ENCODE measurements at regions of chr4 and their contacts with region 1.

Region 1: DNA sequence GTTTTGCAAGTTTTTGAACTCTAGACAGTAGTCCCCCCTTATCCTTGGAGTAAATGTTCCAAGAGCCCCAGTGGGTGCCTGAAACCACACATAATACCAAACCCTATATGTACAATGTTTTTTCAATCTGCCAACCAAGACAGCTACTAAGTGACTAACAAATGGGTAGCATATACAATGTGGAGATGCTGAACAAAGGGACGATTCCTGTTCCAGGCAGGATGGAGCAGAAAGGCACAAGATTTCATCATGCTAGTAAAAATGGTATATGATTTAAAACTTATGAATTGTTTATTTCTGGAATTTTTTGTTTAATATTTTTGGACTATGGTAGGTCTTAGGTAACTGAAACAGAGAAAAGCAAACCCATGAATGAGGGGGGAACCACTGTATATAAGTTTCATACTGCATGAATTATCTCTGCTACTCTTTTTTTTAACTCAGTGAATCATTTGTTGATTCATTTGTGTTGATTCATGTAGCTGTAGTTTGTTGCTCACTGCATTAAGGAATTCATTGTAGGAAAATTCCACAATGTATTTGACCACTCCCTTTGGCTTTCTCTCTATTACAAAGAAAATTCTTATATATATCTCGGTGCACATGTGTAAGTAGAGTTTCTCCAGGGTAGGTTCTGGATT is 21.9 kb upstream of the ANXA3 start:
- DNase-seq: no peak
- ATAC-seq: no peak
- H3K4me3 ChIP-seq: no peak overlapping the region
- H3K27ac ChIP-seq: no peak overlapping the region
- H3K4me1 ChIP-seq: no peaks in the 10 kb centered on the region; a peak in 1 of 5 replicates
- H3K27me3 ChIP-seq: peaks cover 10 to 13% of the 10 kb centered on the region in 2 experiments; a peak in 4 of 5 replicates
- CTCF ChIP-seq: no peak
- EP300 ChIP-seq: no peak
- POLR2A ChIP-seq: no peak
- RAD21 ChIP-seq: no peak

Region 2: DNA sequence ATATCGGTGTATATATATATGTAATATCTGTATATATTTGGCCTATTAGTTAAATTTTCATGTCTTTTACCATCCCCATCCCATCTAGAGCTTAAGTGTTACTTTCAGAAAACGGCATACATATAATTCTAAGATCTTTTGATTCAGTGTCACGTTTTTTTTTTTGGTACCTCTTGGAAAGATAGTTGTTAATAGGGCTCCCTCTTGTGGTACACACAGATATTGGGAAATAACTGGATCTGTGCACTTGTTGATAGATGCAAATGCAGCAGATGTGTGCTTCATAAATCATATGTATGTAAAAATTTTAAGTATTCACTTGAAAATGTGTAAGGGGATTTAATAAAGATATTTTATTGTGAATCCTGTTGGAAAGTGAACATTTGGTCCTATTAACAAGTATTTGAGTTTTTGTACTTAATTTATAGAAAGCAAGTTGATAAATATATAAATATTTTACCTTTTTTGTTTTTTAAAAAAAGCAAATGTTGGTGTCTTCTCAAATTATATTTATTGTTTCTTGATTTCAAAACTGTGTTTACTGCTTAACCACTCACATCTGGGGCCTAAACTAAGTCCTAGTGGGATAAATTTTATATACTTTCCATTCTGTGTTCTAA is 334.8 kb after region 1 on chr4:
- CTCF ChIA-PET with region 1: no interaction called
- POLR2A ChIA-PET with region 1: no interaction called
- in situ Hi-C with region 1: no loop called
- intact Hi-C with region 1: loop called (anchors 10 kb)
- DNase-seq: peak; percentile 24 to 75 (median 42)
- ATAC-seq: peak; percentile 81
- H3K4me3 ChIP-seq: no peak overlapping the region
- H3K27ac ChIP-seq: no peak overlapping the region
- H3K4me1 ChIP-seq: no peaks in the 10 kb centered on the region
- H3K27me3 ChIP-seq: no peaks in the 10 kb centered on the region
- CTCF ChIP-seq: peak; percentile 48 to 79 (median 57); a peak in 5 of 6 replicates
- EP300 ChIP-seq: no peak
- POLR2A ChIP-seq: no peak
- RAD21 ChIP-seq: peak; percentile 61 to 75